ENCODE measurements at regions of chr1 and their contacts with region 1.

Region 1: DNA sequence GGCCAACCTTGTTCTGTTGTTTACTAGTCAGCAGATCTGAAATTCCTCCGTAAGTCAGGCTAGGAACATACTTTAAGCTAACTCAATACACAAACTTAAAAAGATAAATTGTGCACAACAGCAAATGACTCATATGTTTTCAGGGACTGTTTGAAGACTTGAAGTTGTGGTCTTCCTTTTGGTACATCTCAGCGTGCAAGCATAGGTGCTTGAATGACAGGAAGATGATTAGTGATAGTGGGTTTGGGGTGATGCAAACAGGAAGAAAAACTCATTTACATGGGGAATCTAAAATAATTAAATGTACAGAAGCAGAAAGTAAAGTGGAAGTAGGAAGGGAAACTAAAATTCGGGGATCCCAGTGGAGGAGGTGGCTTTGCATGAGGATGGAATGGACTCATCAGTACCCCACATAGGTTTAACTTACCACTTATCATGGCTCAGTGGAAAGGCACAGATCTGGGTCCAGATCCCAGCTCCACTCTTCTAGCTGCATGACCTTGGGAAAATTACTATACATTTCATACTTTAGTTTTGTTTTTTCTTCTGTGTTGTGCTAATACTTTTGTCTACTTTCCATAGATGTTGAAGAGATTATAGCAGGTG is 122.3 kb downstream of the XCL2 start:
- DNase-seq: peak; percentile 45 to 66 (median 52)
- H3K4me3 ChIP-seq: no peak overlapping the region
- H3K4me3 Mint-ChIP-seq: peak overlapping the region; percentile 32 to 81 (median 60)
- H3K27ac ChIP-seq: peak overlapping the region; percentile 50
- H3K27ac Mint-ChIP-seq: peak overlapping the region; percentile 54 to 86 (median 80)
- H3K4me1 ChIP-seq: peaks cover 35% of the 10 kb centered on the region
- H3K4me1 Mint-ChIP-seq: peaks cover 22 to 46% (median 36%) of the 10 kb centered on the region in 4 donors
- H3K27me3 ChIP-seq: no peaks in the 10 kb centered on the region
- H3K27me3 Mint-ChIP-seq: no peaks in the 10 kb centered on the region

Region 2: GRCh38 chr1:168360151-168361021 is 61.1 kb before region 1 on chr1:
- CTCF ChIA-PET with region 1: interaction called, 16 read pairs
- POLR2A ChIA-PET with region 1: interaction called, 19 read pairs
- intact Hi-C with region 1: no loop called
- DNase-seq: peak in 1 of 5 donors; percentile 55
- H3K4me3 ChIP-seq: no peak overlapping the region
- H3K4me3 Mint-ChIP-seq: peak overlapping the region in 3 of 8 donors; percentile 25 to 48 (median 36)
- H3K27ac ChIP-seq: no peak overlapping the region
- H3K27ac Mint-ChIP-seq: peak overlapping the region in 5 of 7 donors; percentile 79 to 100 (median 90)
- H3K4me1 ChIP-seq: peaks cover 49% of the 10 kb centered on the region
- H3K4me1 Mint-ChIP-seq: peaks cover 27 to 55% (median 44%) of the 10 kb centered on the region in 4 donors
- H3K27me3 ChIP-seq: no peaks in the 10 kb centered on the region
- H3K27me3 Mint-ChIP-seq: no peaks in the 10 kb centered on the region

Region 3: DNA sequence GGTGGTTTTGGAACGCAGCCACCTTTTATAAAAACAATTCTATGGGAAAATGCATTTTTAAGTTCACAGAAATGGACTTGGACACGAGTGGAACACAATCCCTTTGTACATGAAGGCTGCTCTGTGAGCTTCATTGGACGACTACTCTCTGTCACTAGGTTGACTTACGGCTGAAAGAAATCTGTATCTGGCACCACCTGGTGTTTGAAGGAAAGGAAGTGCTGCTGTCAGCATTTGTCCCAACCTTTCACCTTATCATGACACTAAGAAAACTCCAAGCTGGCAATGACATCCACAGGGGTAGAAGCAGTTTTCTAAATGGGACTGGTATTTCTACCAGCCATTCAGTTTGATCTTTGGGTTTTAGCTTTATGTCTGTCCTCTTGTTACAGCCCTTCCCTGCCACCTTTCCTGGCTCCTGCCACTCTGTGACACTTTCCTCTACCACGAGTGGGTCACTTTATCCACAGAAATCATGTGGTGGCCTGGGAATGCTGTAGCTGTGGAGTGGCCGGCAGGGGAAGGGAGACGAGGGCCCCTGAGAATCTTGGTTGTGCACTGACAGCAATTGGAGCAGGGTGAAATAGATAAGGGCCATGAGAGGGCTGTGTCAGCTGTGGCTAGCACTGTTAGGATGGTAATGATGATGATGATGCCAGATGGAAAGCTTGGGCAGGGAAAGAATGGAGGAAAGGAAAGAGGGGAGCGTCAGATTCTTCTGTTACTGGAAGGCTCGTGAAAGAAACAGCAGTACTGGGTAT is 55.6 kb before region 1 on chr1:
- CTCF ChIA-PET with region 1: interaction called, 16 read pairs
- POLR2A ChIA-PET with region 1: interaction called, 19 read pairs
- intact Hi-C with region 1: no loop called
- DNase-seq: peak in 4 of 5 donors; percentile 39 to 46 (median 42)
- H3K4me3 ChIP-seq: no peak overlapping the region
- H3K4me3 Mint-ChIP-seq: no peak overlapping the region
- H3K27ac ChIP-seq: no peak overlapping the region
- H3K27ac Mint-ChIP-seq: peak overlapping the region in 5 of 7 donors; percentile 1 to 69 (median 32)
- H3K4me1 ChIP-seq: peaks cover 47% of the 10 kb centered on the region
- H3K4me1 Mint-ChIP-seq: peaks cover 33 to 48% (median 40%) of the 10 kb centered on the region in 4 donors
- H3K27me3 ChIP-seq: no peaks in the 10 kb centered on the region
- H3K27me3 Mint-ChIP-seq: no peaks in the 10 kb centered on the region

Region 4: DNA sequence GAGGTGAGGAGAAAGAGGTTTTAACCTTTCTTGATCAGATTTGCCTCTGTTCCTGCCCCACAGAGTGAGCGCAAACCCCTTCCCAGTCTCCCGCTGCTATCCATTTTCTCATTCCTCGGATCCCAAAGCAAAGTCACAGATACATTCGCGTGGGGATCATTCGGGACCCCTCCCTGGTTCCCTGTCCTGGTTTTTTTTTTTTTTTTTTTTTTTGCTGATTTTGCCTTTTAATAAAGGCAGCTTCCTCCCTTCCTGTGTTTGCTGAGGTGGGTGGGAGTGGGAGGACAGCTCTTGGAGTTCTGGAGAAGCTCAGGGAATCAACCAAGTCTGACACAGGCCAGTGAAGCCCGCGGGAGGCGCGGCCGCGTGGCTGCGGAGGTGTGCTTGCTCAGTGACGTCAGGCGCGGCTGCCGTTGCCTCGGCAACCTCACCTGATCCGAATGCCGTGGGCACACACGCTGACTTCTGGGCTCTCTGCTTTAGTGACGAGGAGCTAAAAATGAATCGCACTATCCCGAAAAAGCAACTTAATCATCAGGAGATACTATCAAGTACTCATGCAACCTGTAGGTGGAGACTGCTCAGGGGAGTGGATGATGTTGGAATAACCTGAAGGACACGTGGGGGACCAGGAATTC is 34.4 kb before region 1 on chr1:
- CTCF ChIA-PET with region 1: no interaction called
- POLR2A ChIA-PET with region 1: interaction called, 23 read pairs
- intact Hi-C with region 1: loop called (anchors 5 kb)
- DNase-seq: peak; percentile 73 to 85 (median 77)
- H3K4me3 ChIP-seq: peak overlapping the region in 1 of 2 donors; percentile 41
- H3K4me3 Mint-ChIP-seq: peak overlapping the region; percentile 59 to 87 (median 71)
- H3K27ac ChIP-seq: no peak overlapping the region
- H3K27ac Mint-ChIP-seq: peak overlapping the region; percentile 84 to 98 (median 94)
- H3K4me1 ChIP-seq: peaks cover 18% of the 10 kb centered on the region
- H3K4me1 Mint-ChIP-seq: peaks cover 11 to 35% (median 25%) of the 10 kb centered on the region in 4 donors
- H3K27me3 ChIP-seq: no peaks in the 10 kb centered on the region
- H3K27me3 Mint-ChIP-seq: peaks cover 0 to 2% of the 10 kb centered on the region in 2 donors

Region 5: DNA sequence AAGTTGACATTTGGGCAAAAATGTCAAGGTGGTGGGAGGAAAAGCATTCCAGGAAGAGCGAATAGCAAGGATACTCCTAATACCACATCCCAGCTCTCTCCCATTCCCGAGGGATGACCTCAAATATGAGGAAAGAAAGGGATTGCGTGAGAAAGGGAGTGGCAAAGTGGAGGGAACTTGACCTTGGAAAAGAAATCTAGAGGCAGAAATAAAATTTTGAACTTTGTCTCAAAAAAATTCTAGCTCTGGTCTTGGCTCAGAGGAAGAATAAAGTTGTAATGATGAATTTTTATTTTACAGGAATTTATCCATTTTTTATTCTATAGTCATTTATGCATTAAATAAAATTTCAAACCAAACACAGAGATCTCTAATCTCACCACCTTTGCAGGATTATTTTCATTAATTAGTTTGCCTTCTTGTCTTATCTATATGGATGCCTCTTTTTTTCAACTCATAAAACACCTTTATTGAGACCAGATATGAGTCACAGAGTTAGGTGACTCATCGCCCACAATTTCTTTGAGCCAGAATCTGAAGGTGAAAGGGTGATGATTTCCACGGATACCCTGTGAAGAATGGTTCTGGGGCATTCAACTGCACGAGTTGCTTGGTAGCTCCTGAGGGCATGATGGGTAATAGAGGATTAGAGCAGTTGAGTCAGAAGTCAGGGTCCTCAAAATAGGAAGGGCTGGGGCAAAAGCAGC is 12.8 kb before region 1 on chr1:
- CTCF ChIA-PET with region 1: interaction called, 4 read pairs
- POLR2A ChIA-PET with region 1: interaction called, 33 read pairs
- intact Hi-C with region 1: loop called (anchors 1 kb)
- DNase-seq: peak; percentile 40 to 86 (median 49)
- H3K4me3 ChIP-seq: no peak overlapping the region
- H3K4me3 Mint-ChIP-seq: peak overlapping the region; percentile 40 to 85 (median 70)
- H3K27ac ChIP-seq: peak overlapping the region; percentile 17
- H3K27ac Mint-ChIP-seq: peak overlapping the region; percentile 85 to 95 (median 89)
- H3K4me1 ChIP-seq: peaks cover 41% of the 10 kb centered on the region
- H3K4me1 Mint-ChIP-seq: peaks cover 35 to 58% (median 44%) of the 10 kb centered on the region in 4 donors
- H3K27me3 ChIP-seq: no peaks in the 10 kb centered on the region
- H3K27me3 Mint-ChIP-seq: no peaks in the 10 kb centered on the region

Region 6: GRCh38 chr1:168433238-168433637 is 11.7 kb after region 1 on chr1:
- CTCF ChIA-PET with region 1: interaction called, 102 read pairs
- POLR2A ChIA-PET with region 1: interaction called, 20 read pairs
- intact Hi-C with region 1: no loop called
- DNase-seq: no peak
- H3K4me3 ChIP-seq: no peak overlapping the region
- H3K4me3 Mint-ChIP-seq: no peak overlapping the region
- H3K27ac ChIP-seq: no peak overlapping the region
- H3K27ac Mint-ChIP-seq: no peak overlapping the region
- H3K4me1 ChIP-seq: no peaks in the 10 kb centered on the region
- H3K4me1 Mint-ChIP-seq: peaks cover 0 to 4% (median 1%) of the 10 kb centered on the region in 4 donors
- H3K27me3 ChIP-seq: no peaks in the 10 kb centered on the region
- H3K27me3 Mint-ChIP-seq: peaks cover 0 to 1% of the 10 kb centered on the region in 2 donors

Region 7: GRCh38 chr1:168488138-168488537 is 66.6 kb after region 1 on chr1:
- CTCF ChIA-PET with region 1: no interaction called
- POLR2A ChIA-PET with region 1: no interaction called
- intact Hi-C with region 1: no loop called
- DNase-seq: no peak
- H3K4me3 ChIP-seq: no peak overlapping the region
- H3K4me3 Mint-ChIP-seq: peak overlapping the region in 4 of 8 donors; percentile 13 to 36 (median 26)
- H3K27ac ChIP-seq: no peak overlapping the region
- H3K27ac Mint-ChIP-seq: peak overlapping the region in 1 of 7 donors; percentile 22
- H3K4me1 ChIP-seq: peaks cover 29% of the 10 kb centered on the region
- H3K4me1 Mint-ChIP-seq: peaks cover 25 to 51% (median 42%) of the 10 kb centered on the region in 4 donors
- H3K27me3 ChIP-seq: no peaks in the 10 kb centered on the region
- H3K27me3 Mint-ChIP-seq: no peaks in the 10 kb centered on the region

Region 8: DNA sequence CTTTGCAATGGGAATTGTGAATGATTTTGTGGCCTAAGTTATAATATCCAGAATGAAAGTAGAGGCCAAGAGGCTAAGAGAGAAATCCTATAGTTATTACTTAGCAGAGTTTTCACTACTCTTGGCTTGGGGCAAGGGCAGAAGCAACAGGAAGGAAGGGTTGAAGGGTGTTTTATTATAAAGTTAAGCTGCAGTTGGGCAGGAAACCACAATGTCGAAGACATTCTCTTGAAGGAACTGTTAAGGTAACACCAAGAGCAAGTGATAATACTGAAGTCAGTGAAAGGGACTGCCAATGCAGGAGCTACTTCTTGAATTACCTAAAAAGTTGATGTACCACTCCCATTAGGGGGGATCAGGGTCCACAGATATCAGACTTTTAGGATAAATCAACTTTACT is 114.0 kb after region 1 on chr1:
- CTCF ChIA-PET with region 1: interaction called, 4 read pairs
- POLR2A ChIA-PET with region 1: interaction called, 12 read pairs
- intact Hi-C with region 1: no loop called
- DNase-seq: peak; percentile 47 to 63 (median 57)
- H3K4me3 ChIP-seq: peak overlapping the region in 1 of 2 donors; percentile 16
- H3K4me3 Mint-ChIP-seq: peak overlapping the region; percentile 34 to 84 (median 72)
- H3K27ac ChIP-seq: no peak overlapping the region
- H3K27ac Mint-ChIP-seq: peak overlapping the region; percentile 45 to 93 (median 78)
- H3K4me1 ChIP-seq: peaks cover 66% of the 10 kb centered on the region
- H3K4me1 Mint-ChIP-seq: peaks cover 53 to 87% (median 69%) of the 10 kb centered on the region in 4 donors
- H3K27me3 ChIP-seq: no peaks in the 10 kb centered on the region
- H3K27me3 Mint-ChIP-seq: no peaks in the 10 kb centered on the region